Endothelial cell of umbilical vein (primary cell): ENCODE measurements at regions of chr15 and their contacts with region 1.

Region 1: GRCh38 chr15:58182460-58183163 is 44.4 kb downstream of the AQP9 start:
- DNase-seq: peak; percentile 76
- H3K4me3 ChIP-seq: no peak overlapping the region
- H3K27ac ChIP-seq: no peak overlapping the region
- H3K4me1 ChIP-seq: peaks cover 20% of the 10 kb centered on the region
- H3K27me3 ChIP-seq: no peaks in the 10 kb centered on the region
- CTCF ChIP-seq: peak; percentile 83 to 93
- POLR2A ChIP-seq: no peak

Region 2: DNA sequence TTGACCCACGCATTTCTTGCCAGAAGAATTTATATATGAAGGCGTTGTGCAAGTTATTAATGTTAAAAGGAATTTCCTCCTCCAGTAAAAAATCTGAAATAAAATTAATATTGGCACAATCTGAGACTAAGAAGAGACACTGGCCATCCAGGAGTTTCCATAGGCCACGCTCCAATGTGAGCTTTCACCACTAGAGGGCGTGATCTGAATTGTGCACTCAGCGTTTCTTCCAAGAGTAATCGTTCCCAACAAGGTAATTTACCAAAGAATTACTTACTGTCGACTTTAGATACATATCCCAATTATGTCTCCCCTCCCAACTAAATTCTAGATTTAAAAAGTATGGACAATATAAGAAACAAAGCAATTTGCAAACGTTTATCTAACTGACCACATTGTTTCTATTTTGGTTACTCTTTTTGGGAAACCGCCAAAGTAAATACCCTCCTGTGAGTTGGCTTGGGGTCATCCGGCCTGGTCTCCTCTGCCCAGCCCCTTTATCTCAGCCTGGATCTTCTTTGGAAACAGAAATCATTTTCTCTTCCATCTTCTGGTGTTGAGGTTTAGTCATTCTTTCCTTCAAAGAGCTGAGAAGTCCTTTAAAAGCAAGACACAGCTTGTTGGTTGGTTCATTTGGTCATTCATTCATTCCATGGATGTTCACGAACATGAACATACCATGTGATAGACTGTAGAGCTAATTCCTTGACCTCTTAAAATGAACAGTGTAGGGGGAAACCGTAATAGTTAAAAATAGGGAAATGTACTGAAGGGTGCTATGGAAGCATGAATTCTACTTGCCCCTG is 449.9 kb before region 1 on chr15:
- CTCF ChIA-PET with region 1: interaction called, 12 read pairs
- POLR2A ChIA-PET with region 1: no interaction called
- dilution Hi-C with region 1: no loop called
- intact Hi-C with region 1: loop called (anchors 1 kb)
- DNase-seq: peak; percentile 79
- H3K4me3 ChIP-seq: peak overlapping the region in 1 of 3 experiments; percentile 15
- H3K27ac ChIP-seq: no peak overlapping the region
- H3K4me1 ChIP-seq: peaks cover 10% of the 10 kb centered on the region
- H3K27me3 ChIP-seq: no peaks in the 10 kb centered on the region
- CTCF ChIP-seq: peak; percentile 78 to 89
- POLR2A ChIP-seq: no peak

Region 3: DNA sequence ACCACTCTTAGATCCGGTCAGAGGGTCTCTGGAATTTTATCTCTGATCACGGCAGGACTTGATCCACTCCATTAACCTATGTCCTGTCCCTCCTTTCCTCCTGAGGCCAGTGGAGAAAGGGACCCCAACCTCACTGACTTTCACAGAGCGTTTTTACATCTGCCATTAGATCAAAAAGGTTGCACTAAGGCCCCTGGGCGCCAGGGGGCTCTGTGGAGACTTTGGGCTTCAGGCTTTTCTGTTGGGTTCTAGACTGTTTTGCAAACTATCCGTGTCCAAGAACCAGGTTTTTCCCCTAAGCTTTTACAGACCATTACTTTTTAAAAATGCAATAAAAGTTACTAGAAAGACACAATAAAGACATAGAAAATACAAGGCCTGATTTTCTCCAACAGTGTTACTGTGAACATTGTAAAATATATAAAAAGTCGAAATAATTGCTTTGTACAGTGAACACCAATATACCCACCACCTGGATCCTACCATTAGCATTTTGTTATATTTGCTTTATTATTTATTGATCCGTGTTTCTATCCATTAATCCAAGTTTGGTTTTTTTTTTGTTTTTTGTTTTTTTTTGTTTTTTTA is 316.4 kb before region 1 on chr15:
- CTCF ChIA-PET with region 1: interaction called, 14 read pairs
- POLR2A ChIA-PET with region 1: no interaction called
- dilution Hi-C with region 1: no loop called
- intact Hi-C with region 1: loop called (anchors 1 kb)
- DNase-seq: peak; percentile 72
- H3K4me3 ChIP-seq: no peak overlapping the region
- H3K27ac ChIP-seq: no peak overlapping the region
- H3K4me1 ChIP-seq: peaks cover 8% of the 10 kb centered on the region
- H3K27me3 ChIP-seq: no peaks in the 10 kb centered on the region
- CTCF ChIP-seq: peak; percentile 84 to 85
- POLR2A ChIP-seq: no peak

Region 4: DNA sequence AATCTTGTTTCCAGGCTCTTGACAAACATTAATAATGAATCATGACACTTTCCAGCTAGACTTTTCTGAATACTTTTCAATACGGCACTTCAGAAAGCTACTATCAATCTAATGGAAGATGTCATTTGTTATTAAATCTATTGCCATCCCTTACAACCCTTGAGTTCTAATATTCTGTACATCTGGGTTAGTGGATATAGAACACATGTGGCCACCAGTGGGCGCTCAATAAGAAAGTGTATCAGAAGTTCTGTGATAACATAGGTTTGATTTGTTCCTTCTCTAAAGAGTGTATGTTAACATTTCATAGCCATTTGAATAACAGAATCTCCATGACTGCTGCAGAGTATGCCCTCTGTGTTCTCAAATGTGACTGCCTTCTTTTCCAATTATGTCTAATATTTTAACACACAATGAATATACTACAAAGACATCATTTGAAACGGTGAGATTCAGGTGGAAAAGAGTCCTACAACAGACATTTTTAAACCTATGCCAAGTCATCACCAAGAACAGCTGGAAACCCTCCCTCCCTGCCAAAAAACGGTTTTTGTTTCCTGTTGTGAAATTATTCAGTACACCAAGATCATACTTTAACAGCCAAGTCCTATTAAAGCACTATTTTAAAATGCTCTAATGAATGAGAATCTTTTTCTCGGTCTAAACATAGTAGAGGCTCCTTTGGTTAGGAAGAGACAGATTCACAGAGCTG is 139.3 kb before region 1 on chr15:
- CTCF ChIA-PET with region 1: no interaction called
- POLR2A ChIA-PET with region 1: no interaction called
- dilution Hi-C with region 1: no loop called
- intact Hi-C with region 1: loop called (anchors 1 kb)
- DNase-seq: peak; percentile 65
- H3K4me3 ChIP-seq: no peak overlapping the region
- H3K27ac ChIP-seq: no peak overlapping the region
- H3K4me1 ChIP-seq: peaks cover 26% of the 10 kb centered on the region
- H3K27me3 ChIP-seq: no peaks in the 10 kb centered on the region
- CTCF ChIP-seq: peak; percentile 52 to 55
- POLR2A ChIP-seq: no peak

Region 5: DNA sequence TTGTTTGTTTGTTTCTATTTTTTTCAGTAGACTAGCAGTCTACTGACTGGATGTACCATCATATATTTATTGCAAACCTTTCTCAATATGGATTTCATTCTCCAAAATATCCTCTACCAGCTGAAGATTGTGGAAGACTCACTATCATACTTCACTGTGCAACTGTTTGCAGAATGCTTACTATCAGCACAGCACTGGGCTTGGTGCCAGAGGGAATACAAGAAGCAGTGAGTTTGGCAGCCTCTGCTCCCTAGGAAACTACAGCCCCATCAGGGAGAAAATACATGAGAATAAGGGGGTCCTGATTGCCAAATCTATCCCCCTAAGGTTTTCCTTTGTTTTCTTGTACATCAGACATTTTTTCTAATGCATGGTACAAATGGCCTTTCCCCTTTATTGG is 17.0 kb before region 1 on chr15:
- CTCF ChIA-PET with region 1: interaction called, 8 read pairs
- POLR2A ChIA-PET with region 1: no interaction called
- dilution Hi-C with region 1: no loop called
- intact Hi-C with region 1: loop called (anchors 1 kb)
- DNase-seq: peak; percentile 40
- H3K4me3 ChIP-seq: no peak overlapping the region
- H3K27ac ChIP-seq: no peak overlapping the region
- H3K4me1 ChIP-seq: peaks cover 18% of the 10 kb centered on the region
- H3K27me3 ChIP-seq: no peaks in the 10 kb centered on the region
- CTCF ChIP-seq: no peak
- POLR2A ChIP-seq: no peak

Region 6: GRCh38 chr15:58221591-58222241 is 39.1 kb after region 1 on chr15:
- CTCF ChIA-PET with region 1: interaction called, 11 read pairs
- POLR2A ChIA-PET with region 1: no interaction called
- dilution Hi-C with region 1: no loop called
- intact Hi-C with region 1: loop called (anchors 1 kb)
- DNase-seq: peak; percentile 48
- H3K4me3 ChIP-seq: no peak overlapping the region
- H3K27ac ChIP-seq: no peak overlapping the region
- H3K4me1 ChIP-seq: no peaks in the 10 kb centered on the region
- H3K27me3 ChIP-seq: no peaks in the 10 kb centered on the region
- CTCF ChIP-seq: peak; percentile 67 to 72
- POLR2A ChIP-seq: no peak